Activated CD4-positive, alpha-beta T cell treated with anti-CD3 and anti-CD28 coated beads for 36 hours (primary cell): ENCODE measurements at regions of chr5 and their contacts with region 1.

Region 1: GRCh38 chr5:134041570-134042411 is 37.0 kb upstream of the VDAC1 start:
- DNase-seq: no peak
- ATAC-seq: no peak
- H3K4me3 Mint-ChIP-seq: no peak overlapping the region
- H3K27ac Mint-ChIP-seq: peak overlapping the region; percentile 31
- H3K4me1 Mint-ChIP-seq: peaks cover 49% of the 10 kb centered on the region
- H3K27me3 Mint-ChIP-seq: no peaks in the 10 kb centered on the region

Region 2: DNA sequence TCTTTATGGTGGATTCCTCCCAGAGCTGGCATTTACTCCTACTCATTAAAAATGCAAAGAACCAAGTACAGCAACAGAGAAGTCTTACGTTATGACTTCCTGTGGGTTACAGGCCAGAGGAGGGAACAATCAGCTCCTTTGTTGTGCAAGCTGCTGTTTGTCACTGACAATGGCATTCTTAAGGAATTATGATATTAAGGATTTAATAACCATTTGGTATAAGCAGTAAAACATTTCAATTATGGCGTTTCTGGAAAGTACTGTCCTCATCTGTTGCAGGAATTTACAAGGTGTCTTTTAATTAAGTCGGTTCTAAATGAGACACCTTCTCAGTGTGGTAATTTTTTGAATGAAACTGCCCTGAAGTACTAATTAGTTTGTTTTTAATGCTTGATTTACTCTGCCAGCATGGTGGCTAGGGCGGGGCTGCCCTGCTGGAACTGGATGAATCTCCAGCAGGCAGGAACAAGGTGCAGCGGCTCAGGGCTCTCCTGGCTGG is 12.1 kb after region 1 on chr5:
- CTCF ChIA-PET with region 1: interaction called, 39 read pairs
- POLR2A ChIA-PET with region 1: no interaction called
- intact Hi-C with region 1: no loop called
- DNase-seq: peak; percentile 23
- ATAC-seq: peak; percentile 70
- H3K4me3 Mint-ChIP-seq: no peak overlapping the region
- H3K27ac Mint-ChIP-seq: peak overlapping the region; percentile 52
- H3K4me1 Mint-ChIP-seq: peaks cover 50% of the 10 kb centered on the region
- H3K27me3 Mint-ChIP-seq: no peaks in the 10 kb centered on the region

Region 3: GRCh38 chr5:134101686-134102439 is 60.1 kb after region 1 on chr5:
- CTCF ChIA-PET with region 1: interaction called, 91 read pairs
- POLR2A ChIA-PET with region 1: interaction called, 5 read pairs
- intact Hi-C with region 1: loop called (anchors 1 kb)
- DNase-seq: peak; percentile 84
- ATAC-seq: peak; percentile 11
- H3K4me3 Mint-ChIP-seq: no peak overlapping the region
- H3K27ac Mint-ChIP-seq: no peak overlapping the region
- H3K4me1 Mint-ChIP-seq: peaks cover 93% of the 10 kb centered on the region
- H3K27me3 Mint-ChIP-seq: peaks cover 2% of the 10 kb centered on the region

Region 4: DNA sequence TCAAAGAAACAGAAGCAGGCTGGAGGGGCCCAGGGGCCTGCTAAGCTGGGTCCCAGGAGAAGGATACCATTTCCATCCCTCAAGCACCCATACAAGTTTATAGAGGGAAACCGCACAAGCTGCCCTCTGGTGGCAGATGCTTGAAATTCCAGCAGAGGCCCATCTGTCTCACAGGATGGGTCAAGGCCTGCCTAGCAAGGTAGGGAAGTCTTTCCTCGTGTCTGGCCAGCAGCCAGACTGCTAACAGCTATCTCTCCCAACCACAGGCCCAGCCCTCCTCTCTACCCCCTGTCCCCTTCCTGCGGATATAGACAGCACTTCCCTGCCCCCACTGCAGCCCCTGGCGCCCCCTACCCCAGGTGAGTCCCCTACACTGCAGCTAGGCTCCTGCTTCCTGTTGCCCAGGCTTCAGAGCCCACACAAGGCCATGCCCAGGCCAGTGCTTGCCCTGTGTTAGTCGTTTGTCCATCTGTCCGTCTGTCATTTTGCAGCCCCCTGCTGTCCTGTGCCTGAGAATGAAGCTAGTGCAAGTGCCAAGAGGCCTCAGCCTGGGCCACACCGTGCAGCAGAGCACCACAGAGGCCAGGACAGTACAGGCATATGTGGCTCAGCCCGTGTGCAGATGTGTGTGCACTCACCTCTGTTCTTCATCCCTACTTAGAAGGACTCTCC is 98.9 kb after region 1 on chr5:
- CTCF ChIA-PET with region 1: interaction called, 554 read pairs
- POLR2A ChIA-PET with region 1: interaction called, 13 read pairs
- intact Hi-C with region 1: loop called (anchors 1 kb)
- DNase-seq: peak; percentile 82
- ATAC-seq: peak; percentile 42
- H3K4me3 Mint-ChIP-seq: no peak overlapping the region
- H3K27ac Mint-ChIP-seq: no peak overlapping the region
- H3K4me1 Mint-ChIP-seq: peaks cover 69% of the 10 kb centered on the region
- H3K27me3 Mint-ChIP-seq: no peaks in the 10 kb centered on the region

Region 5: GRCh38 chr5:134161513-134162395 is 120.0 kb after region 1 on chr5:
- CTCF ChIA-PET with region 1: interaction called, 58 read pairs
- POLR2A ChIA-PET with region 1: interaction called, 3 read pairs
- intact Hi-C with region 1: no loop called
- DNase-seq: no peak
- ATAC-seq: peak; percentile 82
- H3K4me3 Mint-ChIP-seq: no peak overlapping the region
- H3K27ac Mint-ChIP-seq: peak overlapping the region; percentile 60
- H3K4me1 Mint-ChIP-seq: peaks cover 43% of the 10 kb centered on the region
- H3K27me3 Mint-ChIP-seq: no peaks in the 10 kb centered on the region